ENCODE measurements at regions of chr17 and their contacts with region 1.

Region 1: GRCh38 chr17:45161019-45161825 is 453 bp upstream of the HEXIM2 start:
- DNase-seq: peak; percentile 95

Region 2: DNA sequence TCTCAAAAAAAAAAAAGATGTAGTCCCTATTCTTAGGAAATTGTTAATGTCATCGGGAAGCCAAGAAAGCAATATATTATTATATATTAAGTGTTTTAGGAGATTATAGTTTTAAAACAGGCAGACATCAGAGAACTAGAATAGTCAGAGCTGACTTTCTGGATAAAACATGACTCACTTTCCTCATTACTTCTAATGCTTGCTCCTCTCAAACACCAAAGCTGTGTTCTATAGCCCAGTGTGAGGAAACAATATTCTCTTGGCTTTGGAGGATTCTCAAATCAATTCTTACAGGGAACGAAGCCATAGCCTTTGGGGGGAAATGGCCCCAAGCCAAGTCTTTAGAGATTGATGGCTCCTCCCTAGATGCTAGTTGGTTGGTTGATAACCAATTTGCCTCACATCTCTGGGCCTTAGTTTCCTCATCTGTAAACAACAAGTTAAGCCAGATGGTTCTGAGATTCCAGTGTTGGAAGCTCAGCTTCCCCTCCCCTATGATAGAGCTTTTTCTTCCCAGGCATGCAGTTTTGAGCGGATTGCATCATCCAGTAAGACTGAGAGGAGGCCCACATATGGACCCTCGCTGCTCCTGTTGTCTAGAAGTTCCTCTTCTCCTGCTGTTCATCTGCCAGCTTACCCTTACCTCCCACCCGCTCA is 87.7 kb before region 1 on chr17:
- CTCF ChIA-PET with region 1: no interaction called
- POLR2A ChIA-PET with region 1: no interaction called
- DNase-seq: no peak

Region 3: GRCh38 chr17:45172454-45173286 is 11.4 kb after region 1 on chr17:
- CTCF ChIA-PET with region 1: interaction called, 3 read pairs
- POLR2A ChIA-PET with region 1: interaction called, 85 read pairs
- DNase-seq: no peak